ENCODE measurements at regions of chr12 and their contacts with region 1.

Region 1: DNA sequence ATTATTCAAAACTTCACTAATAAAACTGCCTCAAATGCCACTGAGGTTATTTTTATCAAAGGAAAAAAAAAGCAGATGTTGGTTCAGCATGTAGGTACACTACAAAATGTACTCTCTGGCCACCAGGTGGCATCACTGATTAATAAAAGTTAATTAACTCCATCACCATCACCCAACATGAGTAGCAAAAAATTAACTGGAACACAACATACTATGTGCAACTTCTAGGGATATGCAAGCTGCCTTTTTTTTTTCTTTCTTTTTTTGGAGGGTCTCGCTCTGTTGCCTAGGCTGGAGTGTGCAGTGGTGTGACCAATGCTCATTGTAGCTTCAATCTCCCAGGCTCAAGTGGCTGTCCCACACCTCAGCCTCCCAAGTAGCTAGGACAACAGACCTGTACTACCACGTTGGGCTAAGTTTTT is 43.8 kb upstream of the NR2C1 start:
- DNase-seq: peak in 1 of 2 donors; percentile 71
- H3K4me3 ChIP-seq: no peak overlapping the region
- CTCF ChIP-seq: no peak
- POLR2A ChIP-seq: no peak

Region 2: DNA sequence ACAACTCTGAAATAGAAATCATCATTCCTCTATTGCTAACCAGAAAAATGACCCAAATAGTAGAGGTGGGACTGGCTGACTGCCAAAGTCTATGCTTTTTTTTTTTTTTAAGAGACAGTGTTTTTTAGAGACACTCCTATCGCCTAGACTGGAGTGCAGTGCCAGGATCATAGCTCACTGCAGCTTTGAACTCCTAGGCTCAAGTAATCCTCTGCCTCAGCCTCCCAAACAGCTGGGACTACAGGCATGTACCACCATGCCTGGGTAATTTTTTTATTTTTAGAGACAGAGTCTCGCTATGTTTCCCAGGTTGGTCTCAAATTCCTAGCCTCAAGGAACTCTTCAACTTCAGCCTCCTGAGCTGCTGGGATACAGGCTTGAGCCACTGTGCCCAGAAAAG is 63.0 kb before region 1 on chr12:
- intact Hi-C with region 1: no loop called
- DNase-seq: no peak
- H3K4me3 ChIP-seq: no peak overlapping the region
- CTCF ChIP-seq: no peak
- POLR2A ChIP-seq: no peak

Region 3: DNA sequence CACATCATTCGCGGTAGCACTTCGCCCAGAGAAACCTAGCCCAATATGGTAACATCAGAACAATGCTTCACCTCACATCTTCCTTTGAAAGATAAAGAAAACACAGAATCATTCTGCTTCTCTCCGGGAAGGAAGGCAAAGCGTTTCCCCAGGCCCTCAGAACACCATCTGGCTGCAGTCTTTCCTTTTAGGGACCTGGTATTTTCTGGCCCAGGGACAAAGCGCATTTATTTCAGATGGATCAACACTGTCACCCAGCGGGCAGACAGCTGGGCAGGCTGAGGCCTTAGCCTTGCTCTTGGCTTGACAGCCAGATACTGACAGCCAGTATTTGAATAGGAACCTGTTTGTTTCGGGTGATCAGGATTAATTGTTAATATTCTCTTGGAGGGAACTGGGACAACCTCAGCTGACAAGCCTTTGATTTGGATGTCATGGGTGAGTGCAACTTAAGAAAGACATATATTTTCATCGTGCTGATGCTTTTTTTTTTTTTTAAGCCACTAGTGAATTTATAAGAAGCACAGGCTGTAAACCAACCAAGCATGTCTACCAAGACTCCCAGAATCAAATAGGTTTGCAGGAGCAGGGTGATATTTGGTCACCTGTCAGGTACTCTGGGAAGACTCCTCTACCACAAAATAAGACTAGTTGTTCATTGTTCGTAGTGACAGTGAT is 219.3 kb after region 1 on chr12:
- intact Hi-C with region 1: loop called (anchors 10 kb)
- DNase-seq: peak in 1 of 2 donors; percentile 49
- H3K4me3 ChIP-seq: no peak overlapping the region
- CTCF ChIP-seq: no peak
- POLR2A ChIP-seq: no peak

Region 4: DNA sequence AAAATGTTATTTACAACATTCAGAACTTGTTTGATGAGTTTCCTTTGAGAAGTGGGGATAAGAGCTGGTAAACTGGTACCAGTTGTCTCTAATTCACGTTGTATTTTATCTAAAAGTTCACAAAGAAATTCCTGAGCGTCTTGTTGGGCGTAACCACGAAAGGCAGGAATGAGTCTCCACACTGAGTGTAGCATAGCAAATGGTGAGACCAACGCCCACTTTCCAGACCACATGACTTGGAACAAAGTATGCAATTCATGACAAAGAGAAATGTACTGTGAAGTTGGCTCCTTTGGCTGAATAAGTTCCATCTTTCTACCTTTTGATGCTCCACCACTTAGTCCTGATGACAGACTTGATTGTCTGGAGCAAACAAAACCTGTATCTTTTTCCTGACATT is 415.7 kb after region 1 on chr12:
- intact Hi-C with region 1: loop called (anchors 5 kb)
- DNase-seq: no peak
- H3K4me3 ChIP-seq: no peak overlapping the region
- CTCF ChIP-seq: no peak
- POLR2A ChIP-seq: no peak

Measured in lower leg skin (tissue), 4 donors.